ENCODE measurements at regions of chr1 and their contacts with region 1.

Region 1: DNA sequence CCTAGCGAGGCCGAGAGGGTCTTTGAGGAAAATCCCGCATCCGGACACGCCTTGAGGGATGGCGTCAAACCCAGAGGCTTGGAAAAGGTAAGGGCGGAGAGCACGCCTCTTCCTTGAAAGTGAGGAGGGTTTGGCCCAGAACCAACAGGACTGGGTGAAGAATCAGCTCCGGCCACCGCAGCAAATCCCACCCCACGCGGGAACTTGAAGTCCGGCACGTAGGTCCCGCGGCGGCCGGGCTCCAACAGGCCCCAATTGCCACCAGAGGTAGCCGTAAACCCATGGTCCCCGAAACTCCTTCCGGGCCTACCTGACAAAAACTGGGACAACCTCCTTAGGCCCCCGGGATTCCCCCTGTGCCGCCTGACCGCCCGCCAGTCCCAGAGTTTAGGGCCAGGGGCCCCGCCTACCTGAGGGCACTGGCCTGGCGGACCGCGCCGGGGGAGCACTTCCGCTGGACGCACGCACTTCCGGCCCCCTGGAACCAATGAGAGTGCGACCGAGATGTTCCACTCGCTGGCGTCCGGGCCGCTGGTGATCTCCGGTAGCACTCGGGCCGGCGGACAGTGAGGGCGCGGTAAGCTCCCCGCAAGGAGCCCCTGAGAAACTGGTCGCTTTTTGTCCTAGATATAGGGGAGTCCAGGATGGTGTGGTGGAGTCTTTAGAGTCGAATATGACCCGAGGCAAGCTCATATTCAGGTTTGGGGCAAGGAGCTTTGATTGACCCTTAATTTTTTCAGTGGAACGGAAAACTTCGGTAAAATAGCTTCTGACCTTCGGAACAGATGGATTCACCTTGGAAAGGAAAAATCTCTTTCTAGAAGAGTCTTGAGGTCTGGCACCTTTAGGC is at the starts of genes LZIC and NMNAT1:
- DNase-seq: peak; percentile 78 to 91
- H3K4me3 ChIP-seq: peak within 1 kb of the TSS; percentile 86
- H3K27ac ChIP-seq: peak within 1 kb of the TSS; percentile 88
- H3K4me1 ChIP-seq: peaks cover 6% of the 10 kb centered on the region
- H3K27me3 ChIP-seq: no peaks in the 10 kb centered on the region
- CTCF ChIP-seq: no peak
- total RNA-seq, gene LZIC: 27.4 and 33.5 TPM in 2 replicates
- total RNA-seq, gene NMNAT1: 10.1 and 13.4 TPM in 2 replicates

Region 2: DNA sequence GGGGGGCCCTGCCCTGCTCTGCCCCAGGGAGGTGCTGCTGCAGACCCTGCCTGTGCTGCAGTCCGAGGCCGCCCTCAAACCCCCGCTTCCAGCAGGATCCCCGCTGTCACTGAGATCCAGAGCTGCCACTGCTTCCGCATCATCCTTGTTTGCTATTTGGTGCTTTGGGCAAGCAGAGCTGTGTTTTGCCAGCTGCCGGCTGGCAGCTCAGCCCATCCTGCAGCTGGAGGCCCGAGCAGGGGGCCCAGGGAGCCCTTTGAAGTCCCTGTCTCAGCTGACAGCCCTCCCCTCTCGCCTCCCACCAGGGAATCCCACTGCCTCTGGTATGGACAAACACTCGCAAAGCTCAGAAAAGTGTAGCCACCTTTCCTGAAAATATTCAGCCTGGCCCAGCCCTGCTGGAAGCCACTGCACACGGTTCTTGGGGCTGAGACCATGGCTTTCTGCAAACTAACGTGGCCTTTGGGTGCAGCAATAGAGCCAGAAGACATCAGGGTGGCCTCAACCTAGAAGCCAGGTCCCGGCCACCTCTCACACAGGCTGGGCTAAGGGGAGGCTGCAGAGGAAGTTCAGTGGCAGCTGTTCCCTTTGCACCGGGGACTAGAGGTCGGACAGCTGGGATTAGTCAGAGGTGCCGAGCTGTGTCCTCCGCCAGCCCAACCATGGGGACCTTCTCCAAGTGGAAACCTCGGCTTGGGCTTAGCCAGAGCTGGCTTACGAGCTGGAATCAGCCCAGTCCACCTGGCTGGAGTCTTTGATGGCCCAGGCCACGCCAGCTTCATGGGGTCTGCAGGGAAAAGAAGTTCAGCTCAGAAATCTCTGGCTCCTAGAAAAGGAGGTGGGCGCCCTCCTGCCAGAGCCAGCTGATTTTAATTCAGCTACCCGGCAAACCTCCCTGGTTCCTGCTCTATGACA is 543.4 kb before region 1 on chr1:
- CTCF ChIA-PET with region 1: no interaction called
- POLR2A ChIA-PET with region 1: no interaction called
- intact Hi-C with region 1: no loop called
- DNase-seq: no peak
- H3K4me3 ChIP-seq: no peak overlapping the region
- H3K27ac ChIP-seq: no peak overlapping the region
- H3K4me1 ChIP-seq: peaks cover 27% of the 10 kb centered on the region
- H3K27me3 ChIP-seq: no peaks in the 10 kb centered on the region
- CTCF ChIP-seq: no peak

Region 3: DNA sequence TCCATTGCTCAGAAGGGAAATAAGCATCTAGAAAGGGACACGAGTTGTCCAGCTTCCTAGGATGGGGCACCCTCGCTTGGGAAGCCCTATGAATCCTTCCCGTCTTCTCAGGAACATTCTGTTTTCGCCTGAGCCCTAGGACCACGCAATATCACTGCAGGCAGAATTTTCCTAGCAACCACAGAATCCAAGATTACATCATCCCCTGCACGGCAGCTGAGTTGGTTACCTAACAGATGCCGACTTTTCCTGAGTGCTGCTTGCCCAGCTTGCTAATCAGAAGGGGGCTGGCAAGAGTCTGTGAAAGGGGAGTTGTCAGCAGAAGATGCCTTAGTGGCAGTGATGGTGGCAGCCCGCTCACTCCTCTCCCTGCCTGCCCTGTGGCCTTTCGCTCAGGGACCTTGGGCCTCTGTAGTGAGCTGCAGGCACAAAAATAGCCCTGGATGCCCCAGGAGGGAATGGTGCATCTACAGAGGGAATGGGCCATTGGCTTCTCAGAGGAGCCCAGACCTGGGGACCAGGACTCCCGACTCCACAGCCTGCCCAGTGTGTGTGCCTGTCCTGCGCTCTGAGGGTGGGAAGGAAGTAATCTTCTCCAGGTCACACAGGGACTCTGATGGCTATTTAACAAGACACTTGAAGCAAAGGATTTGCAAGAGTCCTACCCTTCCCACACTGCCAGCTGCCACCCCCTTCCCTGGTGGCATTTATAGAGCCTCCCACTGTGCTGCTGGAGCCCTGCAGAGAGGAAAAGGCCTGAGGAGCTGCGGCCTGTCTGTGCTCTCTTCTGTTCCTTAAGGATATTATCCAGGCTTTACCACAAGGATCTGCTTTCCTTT is 90.5 kb before region 1 on chr1:
- CTCF ChIA-PET with region 1: no interaction called
- POLR2A ChIA-PET with region 1: no interaction called
- intact Hi-C with region 1: no loop called
- DNase-seq: no peak
- H3K4me3 ChIP-seq: no peak overlapping the region
- H3K27ac ChIP-seq: no peak overlapping the region
- H3K4me1 ChIP-seq: no peaks in the 10 kb centered on the region
- H3K27me3 ChIP-seq: no peaks in the 10 kb centered on the region
- CTCF ChIP-seq: no peak

Region 4: DNA sequence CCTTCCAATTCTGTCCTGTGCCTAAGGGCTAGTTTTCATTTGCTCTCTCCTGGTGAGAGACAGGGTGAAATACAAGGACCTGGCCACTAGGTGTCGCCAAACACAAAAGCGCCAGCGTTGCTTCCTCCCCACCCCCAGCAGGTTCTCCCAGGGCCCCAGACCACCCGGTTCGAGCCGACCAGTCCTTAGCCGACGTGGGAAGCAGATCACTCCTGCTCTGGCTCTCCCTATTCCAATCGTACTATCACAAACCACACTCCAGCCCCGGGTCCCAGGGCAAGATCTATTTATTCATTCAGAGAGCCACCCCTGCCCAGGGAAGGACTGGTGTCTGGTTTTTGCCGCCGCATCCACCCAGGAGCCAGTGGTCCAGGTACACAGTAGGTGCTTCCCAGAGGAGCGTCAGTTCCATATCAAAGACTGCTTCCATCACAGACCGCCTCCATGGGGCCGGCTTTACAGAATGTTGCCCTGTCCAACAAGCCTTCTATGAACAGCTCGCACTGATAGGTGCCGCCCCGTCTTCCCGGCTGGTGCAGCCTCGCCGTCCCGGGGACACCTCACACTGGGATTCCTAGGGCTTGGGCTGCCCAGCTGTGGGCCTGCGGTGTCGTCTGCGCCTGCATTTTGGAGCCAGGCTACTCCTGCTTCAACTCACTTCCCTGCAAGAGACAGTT is 68.1 kb before region 1 on chr1:
- CTCF ChIA-PET with region 1: interaction called, 5 read pairs
- POLR2A ChIA-PET with region 1: no interaction called
- intact Hi-C with region 1: loop called (anchors 1 kb)
- DNase-seq: peak; percentile 43 to 65
- H3K4me3 ChIP-seq: no peak overlapping the region
- H3K27ac ChIP-seq: no peak overlapping the region
- H3K4me1 ChIP-seq: peaks cover 14% of the 10 kb centered on the region
- H3K27me3 ChIP-seq: no peaks in the 10 kb centered on the region
- CTCF ChIP-seq: peak; percentile 90

Region 5: DNA sequence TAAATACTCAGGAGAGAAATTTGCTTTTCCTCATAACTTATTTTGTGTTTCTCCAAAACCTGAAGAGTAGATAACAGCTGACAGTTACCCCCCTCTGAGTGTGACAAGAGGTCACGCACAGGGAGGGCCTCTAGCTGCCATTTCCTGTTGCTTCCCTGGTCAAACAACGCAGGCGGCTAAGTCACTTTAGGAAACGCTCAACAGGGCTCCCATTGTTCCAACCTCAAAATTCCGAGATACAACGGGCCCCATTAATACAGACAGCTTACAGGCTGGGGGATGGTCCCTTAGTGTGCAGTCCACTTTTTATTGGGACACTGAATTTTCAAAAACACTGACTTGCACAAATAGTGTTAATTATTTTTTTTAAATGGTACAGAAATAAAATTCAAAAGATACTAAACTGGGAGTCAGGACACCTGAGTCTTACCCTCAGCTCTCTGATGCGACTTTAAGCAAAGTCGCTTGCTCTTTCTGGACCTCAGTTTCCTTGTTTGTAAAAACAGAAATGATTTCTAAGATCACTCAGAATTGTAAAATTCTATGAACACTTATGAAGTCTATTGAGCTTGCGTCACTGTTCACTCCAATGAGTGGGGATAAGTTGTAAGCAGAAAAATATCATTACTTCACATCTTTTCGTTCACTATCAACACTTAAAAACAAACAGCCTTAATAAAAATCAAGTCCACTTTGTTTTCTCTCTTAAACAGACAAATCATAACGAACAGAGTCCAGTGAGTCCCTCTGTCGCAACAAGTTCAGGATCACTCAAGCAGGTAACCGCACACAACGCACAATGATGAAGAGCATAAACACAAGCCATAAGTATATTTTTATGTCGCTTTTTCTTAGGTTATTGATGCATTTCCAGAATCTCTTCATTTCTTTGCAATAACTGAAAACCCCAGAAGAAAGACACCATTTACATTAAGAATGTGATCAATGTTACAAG is 13.5 kb before region 1 on chr1:
- CTCF ChIA-PET with region 1: no interaction called
- POLR2A ChIA-PET with region 1: interaction called, 12 read pairs
- intact Hi-C with region 1: no loop called
- DNase-seq: no peak
- H3K4me3 ChIP-seq: no peak overlapping the region
- H3K27ac ChIP-seq: no peak overlapping the region
- H3K4me1 ChIP-seq: no peaks in the 10 kb centered on the region
- H3K27me3 ChIP-seq: no peaks in the 10 kb centered on the region
- CTCF ChIP-seq: no peak

Region 6: DNA sequence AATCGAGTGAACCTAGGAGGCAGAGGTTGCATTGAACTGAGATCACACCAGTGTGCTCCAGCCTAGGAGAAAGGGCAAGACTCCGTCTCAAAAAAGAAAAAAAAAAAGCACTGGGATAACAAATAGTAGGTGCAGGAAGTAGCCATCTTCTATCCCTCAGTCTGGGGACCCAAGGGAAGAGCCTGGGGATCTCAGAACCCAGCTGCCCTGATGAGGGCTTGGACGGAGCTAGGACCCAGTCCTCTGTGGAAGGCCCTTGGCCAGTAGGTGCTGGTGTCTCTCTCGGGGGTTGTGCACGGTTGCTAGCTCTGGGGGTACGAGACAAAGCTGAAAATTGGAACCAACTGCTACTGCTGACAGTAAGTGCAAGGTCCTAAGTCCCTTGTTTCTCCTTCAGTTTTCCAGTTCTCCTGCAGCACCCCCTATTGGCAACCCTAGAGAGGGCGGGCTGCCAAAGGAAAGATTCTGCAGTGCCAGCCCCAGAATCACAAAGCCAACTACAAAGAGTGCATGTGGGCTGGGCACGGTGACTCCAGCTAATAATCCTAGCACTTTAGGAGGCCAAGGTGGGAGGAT is 209.6 kb after region 1 on chr1:
- CTCF ChIA-PET with region 1: no interaction called
- POLR2A ChIA-PET with region 1: no interaction called
- intact Hi-C with region 1: loop called (anchors 2 kb)
- DNase-seq: peak in 1 of 2 experiments; percentile 32
- H3K4me3 ChIP-seq: no peak overlapping the region
- H3K27ac ChIP-seq: no peak overlapping the region
- H3K4me1 ChIP-seq: no peaks in the 10 kb centered on the region
- H3K27me3 ChIP-seq: no peaks in the 10 kb centered on the region
- CTCF ChIP-seq: peak; percentile 63